Psoas muscle (tissue), 8 donors: ENCODE measurements at regions of chr18 and their contacts with region 1.

Region 1: GRCh38 chr18:35029770-35030169 is 11.4 kb upstream of the MAPRE2 start:
- DNase-seq: no peak
- ATAC-seq: no peak
- H3K4me3 ChIP-seq: peak overlapping the region; percentile 48
- H3K27ac ChIP-seq: peak overlapping the region; percentile 34
- H3K4me1 ChIP-seq: peaks cover 31% of the 10 kb centered on the region
- H3K27me3 ChIP-seq: no peaks in the 10 kb centered on the region
- CTCF ChIP-seq: peak; percentile 17

Region 2: GRCh38 chr18:34990571-34990970 is 39.2 kb before region 1 on chr18:
- intact Hi-C with region 1: loop called in 1 of 2 experiments (anchors 2 kb)
- DNase-seq: peak in 1 of 2 donors; percentile 60
- ATAC-seq: peak; percentile 87 to 95 (median 92)
- H3K4me3 ChIP-seq: peak overlapping the region; percentile 22
- H3K27ac ChIP-seq: peak overlapping the region; percentile 78
- H3K4me1 ChIP-seq: peaks cover 46% of the 10 kb centered on the region
- H3K27me3 ChIP-seq: no peaks in the 10 kb centered on the region
- CTCF ChIP-seq: no peak

Region 3: DNA sequence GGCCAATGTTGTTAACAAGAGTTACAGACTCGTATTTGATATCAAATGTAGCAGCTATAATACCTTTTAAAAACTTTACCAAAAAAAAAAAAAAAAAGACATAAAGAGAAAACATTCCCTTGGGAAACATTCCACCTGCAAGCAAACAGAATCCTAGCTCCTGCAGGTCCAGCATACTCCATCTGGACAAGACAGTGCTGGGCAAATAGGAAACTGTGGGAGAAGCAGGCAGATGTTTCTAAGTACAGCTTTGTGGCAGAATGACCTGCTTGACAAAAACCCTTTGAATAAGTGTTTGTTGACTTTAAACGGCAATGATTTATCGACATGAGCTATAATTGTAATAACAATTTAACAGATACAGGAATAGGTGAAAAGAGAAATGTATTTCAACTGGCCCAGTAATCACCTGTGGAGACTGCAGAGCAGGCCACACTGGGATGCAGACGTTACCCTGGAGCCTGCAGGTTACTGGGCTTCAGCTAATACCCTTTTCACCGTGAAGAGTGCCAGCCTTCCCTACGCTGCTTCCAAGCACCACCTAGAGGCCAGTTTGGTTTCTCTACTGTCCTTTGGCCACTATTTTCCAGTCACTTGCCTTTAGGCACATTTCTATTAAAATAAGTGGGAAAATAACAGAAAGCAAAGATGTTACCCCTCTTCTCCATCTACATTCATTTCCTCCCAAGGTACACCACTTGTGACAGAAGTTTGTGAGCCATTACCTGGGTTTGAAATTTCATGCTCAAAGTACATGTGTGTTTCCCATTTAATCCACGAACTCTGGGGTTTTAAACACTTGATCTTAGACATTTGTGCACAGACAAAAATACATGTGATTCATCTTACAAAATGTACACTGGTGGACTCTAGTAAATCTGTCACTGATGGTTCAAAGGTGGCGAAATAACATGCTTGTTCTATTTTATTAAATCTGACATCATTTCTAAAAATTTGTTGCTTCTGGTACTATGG is 114.1 kb after region 1 on chr18:
- intact Hi-C with region 1: loop called in 1 of 2 experiments (anchors 5 kb)
- DNase-seq: peak; percentile 44 to 65
- ATAC-seq: peak; percentile 87 to 96 (median 92)
- H3K4me3 ChIP-seq: no peak overlapping the region
- H3K27ac ChIP-seq: no peak overlapping the region
- H3K4me1 ChIP-seq: no peaks in the 10 kb centered on the region
- H3K27me3 ChIP-seq: no peaks in the 10 kb centered on the region
- CTCF ChIP-seq: peak; percentile 76

Region 4: DNA sequence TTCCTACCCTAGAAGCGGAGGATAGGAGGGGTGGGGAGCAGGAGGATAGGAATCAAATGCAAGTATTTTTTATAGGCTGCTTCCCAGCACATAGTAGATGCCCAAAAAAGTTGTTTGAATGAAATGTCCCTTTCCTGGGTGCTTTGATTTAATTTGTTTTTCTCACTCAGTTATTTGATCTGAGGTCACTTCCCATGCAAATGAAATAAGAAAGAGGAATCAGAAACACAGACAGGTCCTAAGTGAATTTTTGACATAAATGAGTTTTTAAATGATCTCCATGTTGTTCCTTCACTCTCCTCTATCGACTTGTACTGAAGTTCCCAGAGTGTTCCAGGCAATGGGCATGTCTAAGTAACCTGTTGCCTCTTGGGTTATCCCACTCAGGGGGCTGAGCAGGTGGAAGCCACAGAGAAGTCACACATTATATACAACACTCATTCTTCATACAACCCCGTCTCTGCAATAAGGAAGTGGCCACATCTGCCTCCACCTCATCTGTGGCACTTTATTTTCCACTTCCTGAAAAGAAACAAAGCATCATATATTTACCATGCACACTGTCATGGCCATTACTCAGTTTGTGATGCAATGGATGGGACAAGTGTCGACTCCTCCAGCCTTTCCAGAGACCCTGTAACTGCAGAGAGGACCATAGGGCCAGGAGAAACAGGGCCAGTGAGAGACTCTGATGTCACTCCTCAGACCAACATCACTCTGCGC is 129.1 kb after region 1 on chr18:
- intact Hi-C with region 1: no loop called
- DNase-seq: no peak
- ATAC-seq: no peak
- H3K4me3 ChIP-seq: no peak overlapping the region
- H3K27ac ChIP-seq: no peak overlapping the region
- H3K4me1 ChIP-seq: peaks cover 6% of the 10 kb centered on the region
- H3K27me3 ChIP-seq: no peaks in the 10 kb centered on the region
- CTCF ChIP-seq: no peak